ENCODE measurements at regions of chr1 and their contacts with region 1.

Region 1: GRCh38 chr1:206663832-206664652 is 20.7 kb upstream of the MAPKAPK2 start:
- DNase-seq: peak in 34 of 35 experiments; percentile 24 to 85 (median 56)
- ATAC-seq: peak; percentile 66 to 90 (median 80)
- H3K4me3 ChIP-seq: no peak overlapping the region
- H3K4me3 Mint-ChIP-seq: no peak overlapping the region
- H3K27ac ChIP-seq: no peak overlapping the region
- H3K27ac Mint-ChIP-seq: no peak overlapping the region
- H3K4me1 ChIP-seq: peaks cover 0 to 15% of the 10 kb centered on the region in 2 experiments
- H3K4me1 Mint-ChIP-seq: peaks cover 7 to 13% (median 7%) of the 10 kb centered on the region in 3 donors
- H3K27me3 ChIP-seq: peaks cover 0 to 23% of the 10 kb centered on the region in 2 experiments
- H3K27me3 Mint-ChIP-seq: peaks cover 14 to 30% of the 10 kb centered on the region in 2 donors

Region 2: GRCh38 chr1:206479183-206480125 is 184.6 kb before region 1 on chr1:
- CTCF ChIA-PET with region 1: interaction called, 12 to 17 read pairs
- POLR2A ChIA-PET with region 1: no interaction called
- DNase-seq: peak; percentile 34 to 85 (median 61)
- ATAC-seq: peak; percentile 70 to 81 (median 74)
- H3K4me3 ChIP-seq: no peak overlapping the region
- H3K4me3 Mint-ChIP-seq: no peak overlapping the region
- H3K27ac ChIP-seq: peak overlapping the region; percentile 16
- H3K27ac Mint-ChIP-seq: peak overlapping the region; percentile 64 to 78
- H3K4me1 ChIP-seq: peaks cover 0 to 18% of the 10 kb centered on the region in 2 experiments
- H3K4me1 Mint-ChIP-seq: peaks cover 9 to 31% (median 14%) of the 10 kb centered on the region in 3 donors
- H3K27me3 ChIP-seq: no peaks in the 10 kb centered on the region
- H3K27me3 Mint-ChIP-seq: no peaks in the 10 kb centered on the region

Region 3: DNA sequence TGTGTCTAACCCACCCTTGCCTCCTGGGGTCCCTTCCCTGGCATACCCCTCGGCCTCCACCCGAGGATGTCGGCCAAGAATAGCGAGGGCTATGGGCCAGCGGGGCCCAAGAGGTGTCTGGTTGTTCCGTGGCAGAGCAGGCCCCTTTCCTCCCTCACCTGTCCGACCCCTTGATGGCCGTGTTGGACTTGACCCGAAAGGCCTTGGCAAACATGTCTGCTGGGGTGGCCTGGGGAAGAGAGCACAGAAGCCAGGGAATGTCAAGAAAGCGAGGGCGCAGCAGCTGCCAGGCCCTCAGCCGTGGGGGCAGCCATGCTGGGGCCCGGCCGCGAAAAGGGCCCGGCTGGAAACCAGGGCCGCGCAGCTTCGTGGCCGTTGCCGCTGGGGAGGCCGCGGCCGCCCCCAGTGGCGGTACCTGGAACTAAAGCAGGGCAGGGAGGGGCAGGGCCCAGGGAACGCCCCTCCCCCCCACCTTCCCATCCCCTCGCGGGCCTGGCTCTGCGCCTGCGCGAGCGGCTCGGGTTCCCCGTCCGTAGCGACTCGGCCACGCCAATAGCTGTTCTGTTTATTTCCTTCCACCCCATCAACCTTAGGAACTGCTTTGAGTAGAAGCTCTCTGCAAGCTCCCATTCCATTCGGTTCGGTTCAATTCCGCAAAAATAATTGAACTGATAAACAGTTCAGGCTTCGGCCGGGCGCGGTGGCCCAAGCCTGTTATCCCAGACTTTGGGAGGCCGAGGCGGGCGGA is 51.7 kb before region 1 on chr1 and contains the start of gene EIF2D:
- CTCF ChIA-PET with region 1: interaction called, 4 to 15 read pairs
- POLR2A ChIA-PET with region 1: interaction called in 1 of 2 experiments, 4 read pairs
- DNase-seq: peak; percentile 82 to 96 (median 91)
- ATAC-seq: peak; percentile 97 to 100 (median 98)
- H3K4me3 ChIP-seq: peak within 1 kb of the TSS; percentile 63 to 79
- H3K4me3 Mint-ChIP-seq: peak within 1 kb of the TSS; percentile 91 to 95 (median 92)
- H3K27ac ChIP-seq: peak within 1 kb of the TSS; percentile 71
- H3K27ac Mint-ChIP-seq: peak within 1 kb of the TSS; percentile 91 to 93
- H3K4me1 ChIP-seq: peaks cover 7 to 15% of the 10 kb centered on the region in 2 experiments
- H3K4me1 Mint-ChIP-seq: peaks cover 15 to 23% (median 22%) of the 10 kb centered on the region in 3 donors
- H3K27me3 ChIP-seq: no peaks in the 10 kb centered on the region
- H3K27me3 Mint-ChIP-seq: no peaks in the 10 kb centered on the region
- total RNA-seq, gene EIF2D: 48.0 to 56.7 (median 49.3) TPM

Region 4: GRCh38 chr1:206635080-206635977 is 28.7 kb before region 1 on chr1 and contains the start of gene DYRK3:
- CTCF ChIA-PET with region 1: interaction called, 8 to 45 read pairs
- POLR2A ChIA-PET with region 1: interaction called, 3 read pairs
- DNase-seq: peak; percentile 67 to 92 (median 79)
- ATAC-seq: peak; percentile 95 to 96 (median 96)
- H3K4me3 ChIP-seq: peak within 1 kb of the TSS; percentile 51 to 64
- H3K4me3 Mint-ChIP-seq: peak within 1 kb of the TSS; percentile 84 to 89 (median 85)
- H3K27ac ChIP-seq: no peak within 1 kb of the TSS
- H3K27ac Mint-ChIP-seq: peak within 1 kb of the TSS; percentile 34 to 81
- H3K4me1 ChIP-seq: peaks cover 9 to 19% of the 10 kb centered on the region in 2 experiments
- H3K4me1 Mint-ChIP-seq: peaks cover 11 to 21% (median 15%) of the 10 kb centered on the region in 3 donors
- H3K27me3 ChIP-seq: peaks cover 0 to 17% of the 10 kb centered on the region in 2 experiments
- H3K27me3 Mint-ChIP-seq: peaks cover 3 to 11% of the 10 kb centered on the region in 2 donors
- total RNA-seq, gene DYRK3: 0.73 to 2.0 (median 1.6) TPM

Region 5: DNA sequence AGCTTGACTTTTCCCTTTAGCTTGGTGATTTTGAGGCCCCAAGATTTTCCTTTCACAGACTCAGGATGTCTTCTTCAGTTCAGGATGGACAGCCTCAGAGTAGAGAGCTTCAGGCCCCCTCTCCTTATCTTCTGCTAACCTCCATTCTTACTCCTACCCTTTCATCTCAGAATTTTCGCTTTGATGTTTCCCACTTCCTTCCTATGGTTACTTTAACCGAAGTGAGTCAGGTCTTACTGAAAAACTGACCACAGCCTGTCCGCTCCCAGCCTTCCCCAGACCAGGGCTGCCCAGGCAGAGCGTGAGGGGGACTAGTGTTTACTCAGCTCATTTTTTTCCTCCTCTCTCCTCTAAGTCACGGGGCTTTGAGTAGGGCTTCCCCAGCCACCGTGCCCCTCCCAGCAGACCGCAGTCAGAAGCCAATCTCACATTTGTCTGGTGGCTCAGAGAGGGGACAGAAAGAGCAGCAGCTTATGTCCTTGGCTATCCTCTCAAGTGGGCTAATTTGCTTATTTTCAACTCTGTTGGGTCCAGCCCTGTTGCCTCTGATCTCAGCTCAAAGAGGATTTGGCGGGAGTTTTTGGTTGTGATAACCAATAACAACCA is 102.3 kb after region 1 on chr1:
- CTCF ChIA-PET with region 1: no interaction called
- POLR2A ChIA-PET with region 1: interaction called in 1 of 2 experiments, 10 read pairs
- DNase-seq: peak; percentile 39 to 85 (median 66)
- ATAC-seq: peak; percentile 81 to 85 (median 84)
- H3K4me3 ChIP-seq: peak overlapping the region in 1 of 2 donors; percentile 6
- H3K4me3 Mint-ChIP-seq: peak overlapping the region; percentile 41 to 65 (median 58)
- H3K27ac ChIP-seq: no peak overlapping the region
- H3K27ac Mint-ChIP-seq: peak overlapping the region; percentile 2 to 40
- H3K4me1 ChIP-seq: peaks cover 38 to 61% of the 10 kb centered on the region in 2 experiments
- H3K4me1 Mint-ChIP-seq: peaks cover 64 to 75% (median 69%) of the 10 kb centered on the region in 3 donors
- H3K27me3 ChIP-seq: peaks cover 0 to 2% of the 10 kb centered on the region in 2 experiments
- H3K27me3 Mint-ChIP-seq: no peaks in the 10 kb centered on the region

Region 6: GRCh38 chr1:207186503-207186902 is 522.5 kb after region 1 on chr1:
- CTCF ChIA-PET with region 1: no interaction called
- POLR2A ChIA-PET with region 1: no interaction called
- DNase-seq: no peak
- ATAC-seq: no peak
- H3K4me3 ChIP-seq: no peak overlapping the region
- H3K4me3 Mint-ChIP-seq: no peak overlapping the region
- H3K27ac ChIP-seq: no peak overlapping the region
- H3K27ac Mint-ChIP-seq: no peak overlapping the region
- H3K4me1 ChIP-seq: peaks cover 0 to 6% of the 10 kb centered on the region in 2 experiments
- H3K4me1 Mint-ChIP-seq: peaks cover 14 to 25% (median 18%) of the 10 kb centered on the region in 3 donors
- H3K27me3 ChIP-seq: no peaks in the 10 kb centered on the region
- H3K27me3 Mint-ChIP-seq: no peaks in the 10 kb centered on the region